Adrenal gland (tissue), 19 donors: ENCODE measurements at regions of chr1 and their contacts with region 1.

Region 1: GRCh38 chr1:95035536-95035935 is 37.2 kb downstream of the ALG14 start:
- DNase-seq: no peak
- H3K4me3 ChIP-seq: no peak overlapping the region
- H3K27ac ChIP-seq: no peak overlapping the region
- H3K4me1 ChIP-seq: no peaks in the 10 kb centered on the region
- H3K27me3 ChIP-seq: no peaks in the 10 kb centered on the region
- CTCF ChIP-seq: no peak
- POLR2A ChIP-seq: no peak

Region 2: GRCh38 chr1:94926915-94927404 is 108.6 kb before region 1 on chr1 and contains the start of gene CNN3:
- intact Hi-C with region 1: loop called (anchors 5 to 10 kb)
- DNase-seq: peak; percentile 93 to 96 (median 95)
- H3K4me3 ChIP-seq: peak within 1 kb of the TSS; percentile 41 to 94 (median 66)
- H3K27ac ChIP-seq: peak within 1 kb of the TSS; percentile 93 to 99 (median 95)
- H3K4me1 ChIP-seq: peaks cover 42 to 44% of the 10 kb centered on the region in 2 donors
- H3K27me3 ChIP-seq: no peaks in the 10 kb centered on the region
- CTCF ChIP-seq: peak in 2 of 6 experiments; percentile 10 to 19
- POLR2A ChIP-seq: peak; percentile 98 to 100
- total RNA-seq, gene CNN3: 262 to 766 (median 423) TPM

Region 3: DNA sequence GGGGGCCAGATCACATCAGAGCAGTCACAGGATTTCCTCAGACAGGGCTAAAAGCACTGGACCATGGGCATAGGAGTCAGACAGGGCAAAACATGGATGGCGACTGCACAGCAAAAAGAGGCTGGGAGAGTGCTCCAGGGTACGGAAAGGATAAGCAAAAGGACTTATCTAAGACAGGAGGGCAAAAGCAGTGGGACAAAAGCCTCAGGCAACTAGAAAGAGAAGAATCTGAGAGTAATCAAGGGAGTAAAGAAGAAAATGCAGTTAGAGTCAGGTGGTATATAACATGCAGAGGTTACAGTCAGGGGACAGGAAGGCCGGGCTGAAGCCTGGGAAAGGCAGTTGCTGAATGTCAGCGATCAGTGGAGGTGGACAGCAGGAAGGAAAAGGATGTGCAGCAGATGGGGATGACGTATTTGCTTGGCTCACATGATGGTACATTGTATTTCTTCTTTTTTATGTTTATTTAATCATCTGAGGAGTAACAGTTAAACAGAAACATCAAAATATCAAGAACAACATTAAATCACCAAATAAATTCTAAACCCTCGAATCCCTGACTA is 45.5 kb before region 1 on chr1:
- intact Hi-C with region 1: loop called in 1 of 2 experiments (anchors 5 kb)
- DNase-seq: peak in 2 of 7 donors; percentile 27 to 35
- H3K4me3 ChIP-seq: no peak overlapping the region
- H3K27ac ChIP-seq: peak overlapping the region in 1 of 5 donors; percentile 53
- H3K4me1 ChIP-seq: peaks cover 12 to 17% of the 10 kb centered on the region in 2 donors
- H3K27me3 ChIP-seq: no peaks in the 10 kb centered on the region
- CTCF ChIP-seq: no peak
- POLR2A ChIP-seq: no peak

Region 4: GRCh38 chr1:95095833-95096217 is 60.3 kb after region 1 on chr1:
- intact Hi-C with region 1: no loop called
- DNase-seq: no peak
- H3K4me3 ChIP-seq: no peak overlapping the region
- H3K27ac ChIP-seq: no peak overlapping the region
- H3K4me1 ChIP-seq: peaks cover 0 to 6% of the 10 kb centered on the region in 2 donors
- H3K27me3 ChIP-seq: no peaks in the 10 kb centered on the region
- CTCF ChIP-seq: no peak
- POLR2A ChIP-seq: no peak

Region 5: GRCh38 chr1:95169544-95169943 is 134.0 kb after region 1 on chr1:
- intact Hi-C with region 1: no loop called
- DNase-seq: no peak
- H3K4me3 ChIP-seq: no peak overlapping the region
- H3K27ac ChIP-seq: no peak overlapping the region
- H3K4me1 ChIP-seq: no peaks in the 10 kb centered on the region
- H3K27me3 ChIP-seq: no peaks in the 10 kb centered on the region
- CTCF ChIP-seq: no peak
- POLR2A ChIP-seq: no peak